SK-N-SH (cell line): ENCODE measurements at regions of chr6 and their contacts with region 1.

Region 1: DNA sequence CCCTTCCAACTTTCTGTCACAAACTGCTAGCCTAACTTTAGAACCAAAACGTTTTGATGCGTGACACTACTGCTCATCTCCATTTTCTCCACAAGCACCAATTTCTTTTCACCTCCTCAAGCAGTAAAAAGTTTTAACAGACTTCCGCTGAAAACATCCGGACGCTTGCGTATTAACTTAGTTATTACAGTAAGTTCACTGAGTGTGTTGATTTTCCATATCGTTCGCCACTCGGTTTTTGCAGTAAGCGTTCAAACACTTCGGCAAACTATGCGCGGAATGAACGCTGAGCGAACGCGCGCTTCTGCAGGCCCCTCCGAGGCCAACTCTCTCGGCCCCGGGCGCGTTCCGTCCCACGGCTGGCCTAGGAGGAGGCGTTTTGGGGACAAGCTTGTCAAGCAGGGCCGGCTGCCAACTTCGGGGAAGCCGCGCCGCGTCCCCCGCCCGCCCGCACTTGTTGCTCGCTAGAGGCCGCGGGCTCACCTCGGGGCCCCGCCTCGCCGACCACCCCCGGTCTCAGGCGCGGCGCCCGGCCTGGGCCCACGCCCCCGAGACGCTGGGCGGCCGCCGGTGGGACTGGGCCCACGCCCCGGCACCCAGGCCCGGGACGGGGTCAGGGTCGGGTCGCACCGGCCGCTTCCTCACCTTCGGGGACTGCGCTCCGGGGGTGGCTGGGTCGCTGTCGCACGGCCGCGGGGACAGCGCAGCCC is 945 bp downstream of the PHF10 start:
- DNase-seq: peak; percentile 81
- H3K4me3 ChIP-seq: peak overlapping the region; percentile 65 to 82
- H3K27ac ChIP-seq: peak overlapping the region; percentile 56 to 74
- H3K4me1 ChIP-seq: peaks cover 15 to 19% of the 10 kb centered on the region in 2 experiments; a peak in 3 of 4 replicates
- H3K27me3 ChIP-seq: no peaks in the 10 kb centered on the region
- CTCF ChIP-seq: no peak
- EP300 ChIP-seq: no peak
- RAD21 ChIP-seq: no peak

Region 2: GRCh38 chr6:169566319-169566718 is 157.0 kb before region 1 on chr6:
- CTCF ChIA-PET with region 1: no interaction called
- POLR2A ChIA-PET with region 1: interaction called, 11 read pairs
- DNase-seq: no peak
- H3K4me3 ChIP-seq: no peak overlapping the region
- H3K27ac ChIP-seq: no peak overlapping the region
- H3K4me1 ChIP-seq: 0 out of 4 replicates have a peak, but pooled peaks cover 0 to 2% of the 10 kb centered on the region in 2 experiments
- H3K27me3 ChIP-seq: no peaks in the 10 kb centered on the region
- CTCF ChIP-seq: no peak
- EP300 ChIP-seq: no peak
- RAD21 ChIP-seq: no peak

Region 3: DNA sequence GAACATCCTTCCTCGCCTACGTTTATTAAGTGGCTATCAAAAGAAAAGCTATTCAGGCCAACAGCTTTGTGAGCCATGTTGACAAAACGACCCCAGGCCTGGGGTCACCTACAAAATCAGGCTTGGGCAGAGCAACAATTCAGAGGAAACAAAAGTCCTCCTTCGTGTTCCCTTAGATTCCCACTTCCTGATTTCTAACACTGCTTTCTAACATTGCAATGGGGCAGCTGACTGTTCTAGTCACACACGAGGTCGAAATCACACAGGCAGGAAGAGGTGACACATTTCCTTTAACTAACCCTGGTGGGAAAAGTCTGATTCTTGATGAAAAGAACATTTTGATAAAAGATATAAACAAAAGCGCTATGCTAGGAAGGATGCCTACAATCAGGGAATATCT is 53.5 kb before region 1 on chr6:
- CTCF ChIA-PET with region 1: no interaction called
- POLR2A ChIA-PET with region 1: no interaction called
- DNase-seq: no peak
- H3K4me3 ChIP-seq: no peak overlapping the region
- H3K27ac ChIP-seq: no peak overlapping the region
- H3K4me1 ChIP-seq: no peaks in the 10 kb centered on the region; a peak in 1 of 4 replicates
- H3K27me3 ChIP-seq: no peaks in the 10 kb centered on the region
- CTCF ChIP-seq: no peak
- EP300 ChIP-seq: no peak
- RAD21 ChIP-seq: no peak

Region 4: DNA sequence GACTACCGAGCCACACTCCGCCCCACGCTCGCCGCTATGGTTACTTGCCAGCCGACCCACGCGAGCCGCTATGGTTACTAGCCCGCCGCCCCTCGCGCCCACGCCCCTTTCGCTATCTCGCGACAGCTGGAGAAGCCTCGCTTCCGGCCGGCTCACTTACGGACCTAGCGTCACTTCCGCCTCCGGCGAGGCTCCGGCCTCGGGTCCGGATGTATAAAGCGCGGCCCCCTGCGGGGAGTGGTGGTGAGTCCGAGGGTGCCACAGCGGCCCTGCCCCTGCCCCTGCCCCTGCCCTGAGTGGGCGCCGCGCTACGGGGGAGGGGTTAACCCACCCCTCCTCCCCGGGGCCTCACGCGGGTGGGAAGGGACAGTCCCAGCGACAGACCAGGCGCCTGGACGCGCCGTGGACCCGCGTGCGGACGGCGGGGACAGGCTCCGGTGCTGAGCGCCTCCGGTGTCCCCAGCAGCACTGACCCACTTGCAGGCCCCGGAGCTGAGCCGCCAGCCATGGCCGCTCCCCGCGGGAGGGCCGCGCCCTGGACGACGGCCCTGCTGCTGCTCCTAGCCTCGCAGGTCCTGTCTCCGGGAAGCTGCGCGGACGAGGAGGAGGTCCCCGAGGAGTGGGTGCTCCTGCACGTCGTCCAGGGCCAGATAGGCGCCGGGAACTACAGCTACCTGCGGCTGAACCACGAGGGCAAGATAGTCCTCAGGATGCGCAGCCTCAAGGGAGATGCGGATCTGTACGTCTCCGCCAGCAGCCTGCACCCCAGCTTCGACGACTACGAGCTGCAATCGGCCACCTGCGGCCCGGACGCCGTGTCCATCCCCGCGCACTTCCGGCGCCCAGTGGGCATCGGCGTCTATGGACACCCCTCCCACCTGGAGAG is 21.2 kb before region 1 on chr6 and contains the starts of genes C6orf120 and WDR27:
- CTCF ChIA-PET with region 1: interaction called, 18 read pairs
- POLR2A ChIA-PET with region 1: interaction called, 14 read pairs
- DNase-seq: peak; percentile 97
- H3K4me3 ChIP-seq: peak within 1 kb of the TSS; percentile 95 to 98
- H3K27ac ChIP-seq: peak within 1 kb of the TSS; percentile 84 to 88
- H3K4me1 ChIP-seq: peaks cover 12 to 28% of the 10 kb centered on the region in 2 experiments; a peak in 3 of 4 replicates
- H3K27me3 ChIP-seq: no peaks in the 10 kb centered on the region
- CTCF ChIP-seq: 0 out of 2 replicates have a peak, but pooled peaks have one; percentile 7
- EP300 ChIP-seq: no peak; a peak in 1 of 4 replicates
- RAD21 ChIP-seq: no peak
- polyA plus RNA-seq, gene C6orf120: 10.1 and 12.7 TPM in 2 replicates
- polyA plus RNA-seq, gene WDR27: 55.6 and 58.6 TPM in 2 replicates

Region 5: GRCh38 chr6:169709293-169709692 is 14.1 kb before region 1 on chr6:
- CTCF ChIA-PET with region 1: interaction called, 18 read pairs
- POLR2A ChIA-PET with region 1: interaction called, 3 read pairs
- DNase-seq: no peak
- H3K4me3 ChIP-seq: no peak overlapping the region
- H3K27ac ChIP-seq: peak overlapping the region in 1 of 2 experiments; percentile 22; a peak in 1 of 4 replicates
- H3K4me1 ChIP-seq: peaks cover 0 to 1% of the 10 kb centered on the region in 2 experiments; a peak in 2 of 4 replicates
- H3K27me3 ChIP-seq: no peaks in the 10 kb centered on the region
- CTCF ChIP-seq: no peak
- EP300 ChIP-seq: no peak
- RAD21 ChIP-seq: no peak

Region 6: GRCh38 chr6:169766232-169766631 is 42.9 kb after region 1 on chr6:
- CTCF ChIA-PET with region 1: no interaction called
- POLR2A ChIA-PET with region 1: no interaction called
- DNase-seq: no peak
- H3K4me3 ChIP-seq: no peak overlapping the region
- H3K27ac ChIP-seq: no peak overlapping the region
- H3K4me1 ChIP-seq: no peaks in the 10 kb centered on the region
- H3K27me3 ChIP-seq: no peaks in the 10 kb centered on the region
- CTCF ChIP-seq: no peak
- EP300 ChIP-seq: no peak
- RAD21 ChIP-seq: no peak

Region 7: GRCh38 chr6:169869301-169869700 is 145.9 kb after region 1 on chr6:
- CTCF ChIA-PET with region 1: no interaction called
- POLR2A ChIA-PET with region 1: no interaction called
- DNase-seq: no peak
- H3K4me3 ChIP-seq: no peak overlapping the region
- H3K27ac ChIP-seq: no peak overlapping the region
- H3K4me1 ChIP-seq: no peaks in the 10 kb centered on the region
- H3K27me3 ChIP-seq: no peaks in the 10 kb centered on the region
- CTCF ChIP-seq: no peak
- EP300 ChIP-seq: no peak
- RAD21 ChIP-seq: no peak